ENCODE measurements at regions of chr5 and their contacts with region 1.

Region 1: GRCh38 chr5:36875790-36876388 is 680 bp upstream of the NIPBL start:
- DNase-seq: peak; percentile 74 to 80 (median 76)
- H3K4me3 ChIP-seq: peak overlapping the region; percentile 78 to 86
- H3K4me3 Mint-ChIP-seq: peak overlapping the region; percentile 89 to 99 (median 94)
- H3K27ac ChIP-seq: peak overlapping the region; percentile 93
- H3K27ac Mint-ChIP-seq: peak overlapping the region; percentile 92 to 97 (median 95)
- H3K4me1 ChIP-seq: peaks cover 62% of the 10 kb centered on the region
- H3K4me1 Mint-ChIP-seq: peaks cover 29 to 58% (median 38%) of the 10 kb centered on the region in 4 donors
- H3K27me3 ChIP-seq: no peaks in the 10 kb centered on the region
- H3K27me3 Mint-ChIP-seq: no peaks in the 10 kb centered on the region

Region 2: DNA sequence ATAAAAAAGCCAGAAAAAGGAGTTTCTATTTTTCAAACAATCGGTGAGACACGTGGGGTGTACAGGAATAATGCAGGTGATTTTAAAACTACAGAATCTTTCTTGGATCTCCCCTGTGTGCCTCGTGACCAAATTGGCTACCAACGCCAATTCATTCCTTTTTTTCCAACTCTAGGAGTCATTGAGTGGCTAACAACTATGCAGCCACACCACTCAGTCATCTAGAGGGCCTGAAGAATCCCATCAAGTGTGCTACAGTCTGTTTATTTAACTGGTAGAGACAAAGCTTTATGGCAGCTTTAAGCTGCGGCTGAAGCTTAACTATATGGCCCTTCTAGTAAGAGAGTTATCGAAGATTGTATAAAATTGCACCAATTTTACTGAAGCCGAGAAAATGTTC is 112.4 kb before region 1 on chr5:
- CTCF ChIA-PET with region 1: no interaction called
- POLR2A ChIA-PET with region 1: no interaction called
- intact Hi-C with region 1: no loop called
- DNase-seq: no peak
- H3K4me3 ChIP-seq: no peak overlapping the region
- H3K4me3 Mint-ChIP-seq: no peak overlapping the region
- H3K27ac ChIP-seq: no peak overlapping the region
- H3K27ac Mint-ChIP-seq: no peak overlapping the region
- H3K4me1 ChIP-seq: no peaks in the 10 kb centered on the region
- H3K4me1 Mint-ChIP-seq: no peaks in the 10 kb centered on the region
- H3K27me3 ChIP-seq: no peaks in the 10 kb centered on the region
- H3K27me3 Mint-ChIP-seq: peaks cover 6 to 11% of the 10 kb centered on the region in 2 donors

Region 3: DNA sequence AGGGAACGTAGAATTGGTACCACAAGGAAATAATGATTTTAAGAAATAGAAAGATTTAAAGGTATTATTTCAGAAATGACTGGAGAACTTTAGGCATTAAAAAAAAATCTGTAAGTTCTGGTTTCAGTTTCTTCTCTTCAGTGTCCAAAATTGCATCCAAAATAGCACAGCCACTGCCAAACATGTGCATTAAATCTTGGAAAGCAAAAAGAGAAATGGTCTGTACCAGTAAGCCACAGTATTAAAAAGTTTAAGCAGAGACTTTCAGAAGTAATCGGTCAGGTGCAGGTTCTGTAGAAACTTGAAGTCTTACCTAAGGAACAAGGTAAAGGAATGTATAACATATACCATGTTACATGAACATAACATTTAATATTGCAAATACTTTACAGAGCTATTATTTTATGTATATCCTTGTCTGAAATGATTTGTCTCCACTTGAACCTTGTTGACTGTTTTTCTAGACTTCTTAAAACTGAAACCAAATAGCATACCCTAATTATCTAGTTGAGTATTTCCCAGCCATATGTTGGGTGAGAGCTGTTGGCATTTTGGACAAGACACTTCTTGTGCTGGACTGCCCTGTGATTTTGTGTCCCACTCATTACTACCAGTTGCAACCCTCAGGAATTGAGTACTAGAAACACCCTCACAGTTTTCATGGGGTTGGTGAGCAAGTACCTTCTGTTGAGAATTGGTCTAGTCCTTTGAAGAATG is 32.8 kb after region 1 on chr5:
- CTCF ChIA-PET with region 1: no interaction called
- POLR2A ChIA-PET with region 1: no interaction called
- intact Hi-C with region 1: no loop called
- DNase-seq: no peak
- H3K4me3 ChIP-seq: no peak overlapping the region
- H3K4me3 Mint-ChIP-seq: peak overlapping the region in 3 of 8 donors; percentile 5 to 44 (median 39)
- H3K27ac ChIP-seq: no peak overlapping the region
- H3K27ac Mint-ChIP-seq: peak overlapping the region in 2 of 7 donors; percentile 17 to 19
- H3K4me1 ChIP-seq: peaks cover 58% of the 10 kb centered on the region
- H3K4me1 Mint-ChIP-seq: peaks cover 13 to 51% (median 30%) of the 10 kb centered on the region in 4 donors
- H3K27me3 ChIP-seq: no peaks in the 10 kb centered on the region
- H3K27me3 Mint-ChIP-seq: no peaks in the 10 kb centered on the region

Region 4: GRCh38 chr5:36919238-36919637 is 43.3 kb after region 1 on chr5:
- CTCF ChIA-PET with region 1: no interaction called
- POLR2A ChIA-PET with region 1: no interaction called
- intact Hi-C with region 1: loop called (anchors 5 kb)
- DNase-seq: no peak
- H3K4me3 ChIP-seq: no peak overlapping the region
- H3K4me3 Mint-ChIP-seq: peak overlapping the region in 5 of 8 donors; percentile 4 to 66 (median 20)
- H3K27ac ChIP-seq: no peak overlapping the region
- H3K27ac Mint-ChIP-seq: peak overlapping the region in 3 of 7 donors; percentile 9 to 28 (median 13)
- H3K4me1 ChIP-seq: peaks cover 21% of the 10 kb centered on the region
- H3K4me1 Mint-ChIP-seq: peaks cover 27 to 76% (median 42%) of the 10 kb centered on the region in 4 donors
- H3K27me3 ChIP-seq: no peaks in the 10 kb centered on the region
- H3K27me3 Mint-ChIP-seq: no peaks in the 10 kb centered on the region

Region 5: DNA sequence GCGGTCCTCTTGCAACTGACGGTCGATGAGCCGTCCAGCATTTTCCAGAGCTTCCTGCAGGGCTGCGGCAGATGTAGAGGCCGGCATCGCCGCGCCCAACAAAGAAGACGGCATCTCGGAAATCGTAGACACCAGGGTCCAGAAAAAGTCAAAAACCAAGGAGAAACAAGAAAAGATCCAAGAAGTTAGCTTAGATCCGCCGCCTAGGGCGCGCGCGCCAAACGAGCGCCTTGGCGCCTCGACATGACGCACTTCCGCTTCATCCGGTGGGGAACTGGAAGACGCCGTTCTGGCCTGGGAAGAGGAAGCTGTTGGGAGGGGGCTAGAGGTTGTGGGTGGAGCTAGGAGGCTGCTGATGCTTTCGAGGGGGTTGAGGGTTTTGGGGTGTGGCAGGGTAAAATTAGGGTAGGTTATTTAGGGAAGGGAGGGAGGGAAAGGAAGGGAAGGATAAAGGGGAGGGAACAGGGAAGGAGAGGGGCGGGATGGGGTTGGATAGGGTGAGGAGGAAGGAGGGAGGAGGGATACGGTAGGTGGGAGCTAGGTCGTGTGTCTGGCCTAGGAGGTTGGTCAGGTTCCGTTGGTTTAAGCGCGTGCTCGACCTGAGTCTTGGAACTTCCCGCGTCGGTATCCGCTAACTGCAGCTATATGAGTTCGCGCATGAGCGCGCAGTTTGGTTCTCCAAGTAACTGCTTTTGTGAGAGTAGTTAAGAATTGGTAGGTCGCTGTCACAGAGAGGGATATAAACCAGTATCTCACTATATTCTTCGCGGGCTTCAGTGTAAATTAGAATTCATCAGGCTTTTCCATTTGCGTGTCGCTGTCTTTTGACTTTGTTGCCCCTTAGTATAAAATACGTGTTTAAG is 495.2 kb after region 1 on chr5 and contains the start of gene NUP155:
- CTCF ChIA-PET with region 1: no interaction called
- POLR2A ChIA-PET with region 1: interaction called, 14 read pairs
- intact Hi-C with region 1: loop called (anchors 2 kb)
- DNase-seq: peak; percentile 84 to 95 (median 88)
- H3K4me3 ChIP-seq: peak within 1 kb of the TSS; percentile 80 to 94
- H3K4me3 Mint-ChIP-seq: peak within 1 kb of the TSS; percentile 93 to 98 (median 96)
- H3K27ac ChIP-seq: peak within 1 kb of the TSS; percentile 80
- H3K27ac Mint-ChIP-seq: peak within 1 kb of the TSS; percentile 87 to 99 (median 97)
- H3K4me1 ChIP-seq: peaks cover 40% of the 10 kb centered on the region
- H3K4me1 Mint-ChIP-seq: peaks cover 16 to 42% (median 26%) of the 10 kb centered on the region in 4 donors
- H3K27me3 ChIP-seq: no peaks in the 10 kb centered on the region
- H3K27me3 Mint-ChIP-seq: no peaks in the 10 kb centered on the region
- total RNA-seq, gene NUP155: 30.0 to 30.8 TPM